ENCODE measurements at regions of chr10 and their contacts with region 1.

Region 1: DNA sequence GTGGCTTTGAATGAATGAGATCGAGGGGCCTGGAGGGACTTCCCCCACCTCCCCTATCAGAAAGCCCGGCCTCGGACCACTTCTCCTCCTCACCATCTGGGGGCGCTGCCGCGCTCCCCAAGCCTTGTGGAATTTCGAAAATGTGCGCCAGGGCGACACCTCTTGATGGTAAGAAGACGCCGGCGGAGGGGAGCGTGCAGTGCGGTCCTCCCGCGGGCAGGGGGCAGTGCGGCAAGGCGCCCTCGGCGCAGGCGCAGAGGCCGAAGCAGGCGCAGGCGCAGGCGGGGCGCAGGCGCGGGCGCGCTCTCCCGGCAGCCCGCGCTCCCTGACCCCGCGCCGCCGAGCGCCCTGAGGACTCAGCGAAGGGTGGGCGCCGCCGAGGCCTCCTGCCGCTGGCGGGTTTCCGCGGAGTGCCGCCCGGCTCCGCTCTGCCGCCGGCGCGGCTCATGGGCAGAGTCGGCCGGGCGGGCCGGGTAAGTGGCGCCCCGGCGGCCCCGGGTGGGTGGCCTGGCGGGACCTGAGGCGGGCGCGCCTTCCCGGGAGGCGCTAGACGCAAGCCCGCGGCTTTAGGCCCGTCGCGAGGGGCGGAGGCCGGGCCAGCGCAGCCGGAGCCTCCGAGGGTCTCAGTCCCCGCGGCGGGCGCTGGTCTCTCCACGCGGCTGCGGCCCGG is at the start of gene RBM17:
- DNase-seq: peak; percentile 95 to 100 (median 98)
- H3K4me3 ChIP-seq: peak within 1 kb of the TSS; percentile 68 to 94
- H3K4me3 Mint-ChIP-seq: peak within 1 kb of the TSS; percentile 85 to 99 (median 91)
- H3K27ac ChIP-seq: peak within 1 kb of the TSS; percentile 80
- H3K27ac Mint-ChIP-seq: peak within 1 kb of the TSS; percentile 75 to 96 (median 91)
- H3K4me1 ChIP-seq: peaks cover 57% of the 10 kb centered on the region
- H3K4me1 Mint-ChIP-seq: peaks cover 38 to 70% (median 53%) of the 10 kb centered on the region in 4 donors
- H3K27me3 ChIP-seq: no peaks in the 10 kb centered on the region
- H3K27me3 Mint-ChIP-seq: no peaks in the 10 kb centered on the region
- total RNA-seq, gene RBM17: 117 to 125 TPM

Region 2: DNA sequence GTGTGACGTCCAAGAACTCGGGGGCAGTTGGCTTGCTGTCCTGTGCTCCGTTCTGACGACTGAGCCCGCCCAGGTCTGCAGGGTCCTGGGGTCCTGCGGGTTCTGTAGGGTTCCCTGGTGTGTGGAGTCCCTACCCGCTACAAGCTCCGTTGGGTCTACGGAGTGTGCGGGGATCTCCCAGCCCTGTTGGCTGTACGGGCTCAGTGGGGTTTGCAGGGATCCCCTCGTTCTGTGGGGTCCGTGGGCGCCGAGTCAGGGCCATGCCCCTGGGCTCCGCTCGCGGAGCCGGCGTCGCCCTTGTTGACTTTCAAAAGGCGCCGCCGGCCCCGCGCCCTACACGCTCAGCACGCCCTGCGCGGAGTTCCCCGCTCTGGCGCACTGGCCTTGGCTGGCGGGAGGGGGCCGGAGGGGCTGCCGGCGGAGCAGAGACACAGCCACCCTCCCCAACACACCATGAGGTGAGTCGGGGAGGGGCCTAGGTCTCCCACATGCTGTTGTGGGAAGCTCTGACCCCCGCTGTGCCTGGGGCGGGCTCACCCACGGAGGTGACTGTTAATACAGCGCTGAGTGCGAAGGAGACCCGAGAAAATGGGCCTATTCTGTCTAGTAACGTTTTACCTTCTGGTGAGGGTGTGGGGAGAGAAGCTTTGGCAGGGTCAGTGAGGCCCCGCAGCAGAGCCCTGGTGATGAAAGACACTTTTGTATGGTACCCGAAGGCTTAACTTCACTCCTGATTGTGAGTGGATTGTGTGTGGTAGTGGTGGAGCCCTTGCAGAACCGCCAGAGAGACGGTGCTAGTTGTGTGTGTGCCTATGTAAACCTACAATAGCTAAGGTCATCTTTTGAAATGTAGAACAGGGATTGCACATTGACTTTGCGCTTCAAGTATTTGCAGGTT is 396.1 kb before region 1 on chr10:
- CTCF ChIA-PET with region 1: no interaction called
- POLR2A ChIA-PET with region 1: no interaction called
- intact Hi-C with region 1: loop called (anchors 10 kb)
- DNase-seq: peak; percentile 47 to 80 (median 53)
- H3K4me3 ChIP-seq: peak overlapping the region in 1 of 2 donors; percentile 51
- H3K4me3 Mint-ChIP-seq: peak overlapping the region; percentile 63 to 91 (median 76)
- H3K27ac ChIP-seq: peak overlapping the region; percentile 22
- H3K27ac Mint-ChIP-seq: peak overlapping the region; percentile 9 to 77 (median 64)
- H3K4me1 ChIP-seq: peaks cover 80% of the 10 kb centered on the region
- H3K4me1 Mint-ChIP-seq: peaks cover 45 to 90% (median 68%) of the 10 kb centered on the region in 4 donors
- H3K27me3 ChIP-seq: no peaks in the 10 kb centered on the region
- H3K27me3 Mint-ChIP-seq: no peaks in the 10 kb centered on the region

Region 3: GRCh38 chr10:5977471-5978229 is 111.2 kb before region 1 on chr10 and contains the start of gene IL15RA:
- CTCF ChIA-PET with region 1: interaction called, 14 read pairs
- POLR2A ChIA-PET with region 1: interaction called, 10 read pairs
- intact Hi-C with region 1: loop called (anchors 1 kb)
- DNase-seq: peak; percentile 76 to 92 (median 81)
- H3K4me3 ChIP-seq: peak within 1 kb of the TSS; percentile 79 to 96
- H3K4me3 Mint-ChIP-seq: peak within 1 kb of the TSS; percentile 95 to 99 (median 98)
- H3K27ac ChIP-seq: peak within 1 kb of the TSS; percentile 84
- H3K27ac Mint-ChIP-seq: peak within 1 kb of the TSS; percentile 93 to 98 (median 96)
- H3K4me1 ChIP-seq: peaks cover 23% of the 10 kb centered on the region
- H3K4me1 Mint-ChIP-seq: peaks cover 17 to 42% (median 29%) of the 10 kb centered on the region in 4 donors
- H3K27me3 ChIP-seq: no peaks in the 10 kb centered on the region
- H3K27me3 Mint-ChIP-seq: no peaks in the 10 kb centered on the region
- total RNA-seq, gene IL15RA: 11.1 to 14.7 TPM

Region 4: DNA sequence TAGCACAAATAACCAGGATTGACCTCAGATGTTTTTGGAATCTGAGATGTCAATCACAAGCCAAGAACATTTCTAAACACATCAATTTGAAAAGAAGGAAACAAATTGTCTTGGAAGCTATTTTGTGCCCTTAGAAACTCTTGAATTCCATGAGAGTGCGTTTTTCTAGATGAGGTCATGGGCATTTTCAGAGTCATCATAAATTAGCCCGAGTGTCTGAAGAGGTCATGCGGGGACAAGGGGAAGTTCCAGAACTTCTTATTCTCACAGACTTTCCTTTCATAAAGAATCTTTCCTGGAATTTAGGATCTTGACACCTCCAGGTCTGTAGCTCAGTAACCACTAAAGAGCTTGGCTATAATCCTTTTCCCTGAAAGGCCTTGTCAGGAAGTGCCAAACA is 54.9 kb before region 1 on chr10:
- CTCF ChIA-PET with region 1: interaction called, 49 read pairs
- POLR2A ChIA-PET with region 1: interaction called, 15 read pairs
- intact Hi-C with region 1: loop called (anchors 1 kb)
- DNase-seq: no peak
- H3K4me3 ChIP-seq: no peak overlapping the region
- H3K4me3 Mint-ChIP-seq: no peak overlapping the region
- H3K27ac ChIP-seq: no peak overlapping the region
- H3K27ac Mint-ChIP-seq: peak overlapping the region in 5 of 7 donors; percentile 37 to 82 (median 60)
- H3K4me1 ChIP-seq: peaks cover 61% of the 10 kb centered on the region
- H3K4me1 Mint-ChIP-seq: peaks cover 28 to 78% (median 57%) of the 10 kb centered on the region in 4 donors
- H3K27me3 ChIP-seq: no peaks in the 10 kb centered on the region
- H3K27me3 Mint-ChIP-seq: no peaks in the 10 kb centered on the region

Region 5: GRCh38 chr10:6068422-6068821 is 20.4 kb before region 1 on chr10:
- CTCF ChIA-PET with region 1: interaction called, 53 read pairs
- POLR2A ChIA-PET with region 1: interaction called, 23 read pairs
- intact Hi-C with region 1: no loop called
- DNase-seq: peak; percentile 48 to 73 (median 60)
- H3K4me3 ChIP-seq: peak overlapping the region; percentile 12 to 27
- H3K4me3 Mint-ChIP-seq: peak overlapping the region; percentile 69 to 86 (median 82)
- H3K27ac ChIP-seq: no peak overlapping the region
- H3K27ac Mint-ChIP-seq: peak overlapping the region; percentile 36 to 89 (median 82)
- H3K4me1 ChIP-seq: peaks cover 81% of the 10 kb centered on the region
- H3K4me1 Mint-ChIP-seq: peaks cover 58 to 91% (median 70%) of the 10 kb centered on the region in 4 donors
- H3K27me3 ChIP-seq: no peaks in the 10 kb centered on the region
- H3K27me3 Mint-ChIP-seq: no peaks in the 10 kb centered on the region

Region 6: DNA sequence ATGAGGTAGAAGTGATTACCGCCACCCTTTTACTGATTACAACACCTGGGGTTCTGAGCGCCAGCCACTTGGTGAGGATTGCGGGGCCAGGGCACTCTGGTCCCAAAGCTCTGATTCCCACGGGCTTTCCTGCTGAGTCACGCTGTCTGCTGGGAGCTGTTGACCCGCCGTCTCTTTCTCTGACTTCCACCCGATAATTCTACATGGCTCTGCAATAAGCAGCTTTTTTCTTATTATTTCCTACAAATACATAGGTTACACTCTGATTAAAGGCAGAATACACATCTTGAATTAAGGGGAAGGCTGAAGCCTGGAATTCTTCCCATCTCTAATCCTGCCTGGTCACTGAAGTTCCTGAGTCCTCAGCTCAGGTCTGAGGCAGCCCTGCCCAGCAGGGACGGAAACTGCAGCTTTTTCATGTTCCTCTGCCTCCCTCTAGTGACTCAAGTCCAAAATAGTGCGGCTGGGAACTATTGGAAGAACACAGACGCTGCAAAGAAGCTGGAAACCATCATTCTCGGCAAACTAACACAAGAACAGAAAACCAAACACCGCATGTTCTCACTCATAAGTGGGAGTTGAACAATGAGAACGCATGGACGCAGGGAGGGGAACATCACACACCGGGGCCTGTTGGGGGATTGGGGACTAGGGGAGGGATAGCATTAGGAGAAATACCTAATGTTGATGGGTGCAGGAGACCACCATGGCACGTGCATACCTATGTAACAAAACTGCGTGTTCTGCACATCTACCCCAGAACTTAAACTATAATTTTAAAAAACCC is 312.9 kb after region 1 on chr10:
- CTCF ChIA-PET with region 1: interaction called, 35 read pairs
- POLR2A ChIA-PET with region 1: interaction called, 6 read pairs
- intact Hi-C with region 1: loop called (anchors 5 kb)
- DNase-seq: peak; percentile 57 to 70 (median 65)
- H3K4me3 ChIP-seq: no peak overlapping the region
- H3K4me3 Mint-ChIP-seq: peak overlapping the region in 2 of 8 donors; percentile 51 to 63
- H3K27ac ChIP-seq: no peak overlapping the region
- H3K27ac Mint-ChIP-seq: peak overlapping the region; percentile 32 to 90 (median 64)
- H3K4me1 ChIP-seq: peaks cover 16% of the 10 kb centered on the region
- H3K4me1 Mint-ChIP-seq: peaks cover 8 to 24% (median 13%) of the 10 kb centered on the region in 4 donors
- H3K27me3 ChIP-seq: no peaks in the 10 kb centered on the region
- H3K27me3 Mint-ChIP-seq: peaks cover 0 to 1% of the 10 kb centered on the region in 2 donors

Measured in CD4-positive, alpha-beta memory T cell (primary cell).